Uterus (tissue), 4 donors: ENCODE measurements at regions of chr3 and their contacts with region 1.

Region 1: GRCh38 chr3:69558912-69559311 is 173.0 kb upstream of the FRMD4B start:
- DNase-seq: peak in 1 of 2 donors; percentile 59
- H3K4me3 ChIP-seq: no peak overlapping the region
- H3K27ac ChIP-seq: no peak overlapping the region
- H3K4me1 ChIP-seq: no peaks in the 10 kb centered on the region
- H3K27me3 ChIP-seq: no peaks in the 10 kb centered on the region
- CTCF ChIP-seq: no peak
- POLR2A ChIP-seq: no peak

Region 2: GRCh38 chr3:70871909-70872656 is 1313.2 kb after region 1 on chr3:
- intact Hi-C with region 1: loop called (anchors 10 kb)
- DNase-seq: peak in 1 of 2 donors; percentile 47
- H3K4me3 ChIP-seq: no peak overlapping the region
- H3K27ac ChIP-seq: no peak overlapping the region
- H3K4me1 ChIP-seq: no peaks in the 10 kb centered on the region
- H3K27me3 ChIP-seq: no peaks in the 10 kb centered on the region
- CTCF ChIP-seq: no peak
- POLR2A ChIP-seq: no peak